ENCODE measurements at regions of chr1 and their contacts with region 1.

Region 1: DNA sequence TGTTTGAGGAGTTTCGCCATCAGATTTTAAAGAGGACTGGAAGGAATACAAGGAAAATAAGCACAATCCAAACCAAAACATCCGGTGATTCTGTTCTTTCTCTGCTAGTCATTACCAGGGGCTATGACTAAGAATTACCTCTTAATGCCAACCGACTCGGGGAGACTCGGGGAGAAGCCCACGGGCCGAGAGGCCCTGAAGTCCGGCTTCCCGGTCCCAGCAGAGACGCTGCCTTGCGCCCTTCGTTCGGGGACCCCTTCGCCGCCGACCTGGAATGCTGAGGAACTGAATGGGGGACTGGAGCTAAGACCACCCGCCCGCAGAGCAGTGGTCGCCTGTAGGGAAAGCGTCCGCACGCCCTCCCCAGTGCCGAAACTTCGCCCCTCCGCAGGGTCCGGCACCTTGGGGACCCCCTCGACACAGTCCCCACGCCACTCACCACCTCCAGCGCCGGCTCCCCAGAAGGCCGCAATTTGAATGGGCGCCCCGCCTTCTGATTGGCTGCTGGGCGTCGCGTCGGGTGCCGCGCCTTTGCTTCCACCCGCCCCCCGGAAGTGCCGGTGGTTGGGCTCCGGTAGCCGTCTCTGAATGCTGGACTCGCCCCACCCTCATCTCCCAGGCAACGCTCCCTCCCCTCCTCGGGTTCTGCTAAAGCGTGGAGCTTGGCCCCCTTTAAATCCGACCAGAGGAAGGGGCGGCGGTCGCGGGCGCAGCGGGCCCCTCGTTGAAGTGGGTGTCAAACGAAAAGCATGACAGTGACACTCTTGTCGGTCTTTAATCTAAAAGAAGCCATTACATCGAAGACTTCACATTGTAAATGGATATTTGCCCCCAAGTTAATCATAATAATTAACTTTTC is at the start of gene KIF14:
- DNase-seq: peak; percentile 89 to 95 (median 92)
- H3K4me3 ChIP-seq: peak within 1 kb of the TSS; percentile 87
- H3K4me3 Mint-ChIP-seq: peak within 1 kb of the TSS; percentile 91 to 98 (median 95)
- H3K27ac ChIP-seq: peak within 1 kb of the TSS; percentile 70
- H3K27ac Mint-ChIP-seq: peak within 1 kb of the TSS; percentile 67 to 96 (median 92)
- H3K4me1 ChIP-seq: peaks cover 4% of the 10 kb centered on the region
- H3K4me1 Mint-ChIP-seq: peaks cover 7 to 27% (median 20%) of the 10 kb centered on the region in 3 donors
- H3K27me3 ChIP-seq: no peaks in the 10 kb centered on the region
- H3K27me3 Mint-ChIP-seq: peaks cover 0 to 2% of the 10 kb centered on the region in 2 donors
- total RNA-seq, gene KIF14: 9.3 TPM

Region 2: GRCh38 chr1:200669314-200670241 is 49.1 kb after region 1 on chr1 and contains the start of gene DDX59:
- CTCF ChIA-PET with region 1: interaction called, 30 read pairs
- POLR2A ChIA-PET with region 1: interaction called, 8 read pairs
- DNase-seq: peak; percentile 85 to 90 (median 88)
- H3K4me3 ChIP-seq: peak within 1 kb of the TSS; percentile 95
- H3K4me3 Mint-ChIP-seq: peak within 1 kb of the TSS; percentile 94 to 99 (median 98)
- H3K27ac ChIP-seq: peak within 1 kb of the TSS; percentile 93
- H3K27ac Mint-ChIP-seq: peak within 1 kb of the TSS; percentile 89 to 99 (median 98)
- H3K4me1 ChIP-seq: peaks cover 25% of the 10 kb centered on the region
- H3K4me1 Mint-ChIP-seq: peaks cover 37 to 55% (median 52%) of the 10 kb centered on the region in 3 donors
- H3K27me3 ChIP-seq: no peaks in the 10 kb centered on the region
- H3K27me3 Mint-ChIP-seq: peaks cover 0 to 1% of the 10 kb centered on the region in 2 donors
- total RNA-seq, gene DDX59: 19.0 to 23.4 TPM

Region 3: DNA sequence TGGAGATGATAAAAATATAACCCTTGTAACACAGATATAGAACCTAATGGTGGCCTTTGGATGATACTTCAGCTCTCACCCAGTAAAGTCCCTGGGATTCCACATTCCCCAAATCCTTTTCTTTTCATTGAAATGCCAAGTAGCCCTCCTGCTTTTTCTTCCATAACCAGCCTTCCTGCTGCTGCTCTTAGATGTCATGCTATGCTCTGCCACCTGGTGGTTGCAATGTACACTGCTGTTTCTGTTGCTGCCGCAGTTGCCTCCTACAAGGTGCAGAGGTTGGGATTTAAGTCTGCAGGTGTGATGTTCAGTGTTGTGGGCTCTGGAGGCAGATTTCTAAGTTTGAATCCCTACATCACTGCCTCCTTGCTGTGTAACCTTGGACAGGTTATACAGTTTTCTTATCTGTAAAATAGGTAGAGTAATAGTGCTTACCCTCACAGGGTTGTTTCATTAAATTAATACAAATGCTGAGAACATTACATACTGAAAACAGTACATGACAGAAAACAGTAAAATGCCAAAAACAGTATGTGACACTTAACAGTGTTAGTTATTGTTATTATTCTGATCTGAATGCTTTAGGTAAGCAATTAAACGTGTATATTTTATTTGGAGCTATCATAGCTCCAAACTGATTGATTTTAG is 182.5 kb after region 1 on chr1:
- CTCF ChIA-PET with region 1: interaction called, 19 read pairs
- POLR2A ChIA-PET with region 1: no interaction called
- DNase-seq: peak; percentile 49 to 74 (median 62)
- H3K4me3 ChIP-seq: no peak overlapping the region
- H3K4me3 Mint-ChIP-seq: no peak overlapping the region
- H3K27ac ChIP-seq: no peak overlapping the region
- H3K27ac Mint-ChIP-seq: no peak overlapping the region
- H3K4me1 ChIP-seq: no peaks in the 10 kb centered on the region
- H3K4me1 Mint-ChIP-seq: peaks cover 0 to 4% (median 0%) of the 10 kb centered on the region in 3 donors
- H3K27me3 ChIP-seq: no peaks in the 10 kb centered on the region
- H3K27me3 Mint-ChIP-seq: peaks cover 4 to 10% of the 10 kb centered on the region in 2 donors

Region 4: DNA sequence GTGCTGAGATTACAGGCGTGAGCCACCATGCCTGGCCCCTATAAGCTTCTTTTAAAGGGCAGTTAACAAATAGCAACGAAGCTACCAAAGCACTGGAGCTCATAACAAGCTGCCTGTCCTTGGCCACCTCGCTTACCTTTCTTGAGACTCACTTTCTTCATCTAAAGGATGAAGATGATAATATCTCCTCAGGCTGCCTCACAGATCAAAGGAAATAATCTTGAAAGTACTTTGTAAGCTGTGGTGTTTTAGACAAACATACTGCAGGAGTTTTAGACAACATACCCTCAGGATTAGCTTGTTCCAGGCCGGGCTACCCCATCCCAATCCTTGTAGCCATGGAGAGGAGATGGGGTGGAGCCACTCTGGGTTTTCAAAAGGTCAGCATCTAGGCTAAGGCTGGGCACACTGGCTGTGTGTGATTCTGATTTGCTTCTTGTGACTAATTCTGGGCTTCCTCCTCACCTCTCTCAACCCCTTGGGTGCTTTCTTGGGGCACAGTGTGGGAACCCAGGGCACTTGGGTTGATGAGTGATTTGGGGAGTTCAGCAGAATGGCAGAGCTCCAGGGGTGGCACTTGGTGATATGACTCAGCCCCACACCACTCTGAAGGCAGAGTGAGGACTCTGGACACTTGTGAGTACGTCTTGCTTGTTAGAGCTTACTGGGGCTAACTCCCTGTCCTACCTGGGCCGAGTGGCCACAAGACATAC is 257.5 kb after region 1 on chr1:
- CTCF ChIA-PET with region 1: interaction called, 10 read pairs
- POLR2A ChIA-PET with region 1: no interaction called
- DNase-seq: peak in 1 of 5 donors; percentile 19
- H3K4me3 ChIP-seq: no peak overlapping the region
- H3K4me3 Mint-ChIP-seq: peak overlapping the region in 3 of 7 donors; percentile 11 to 50 (median 23)
- H3K27ac ChIP-seq: no peak overlapping the region
- H3K27ac Mint-ChIP-seq: peak overlapping the region in 7 of 8 donors; percentile 40 to 89 (median 63)
- H3K4me1 ChIP-seq: peaks cover 20% of the 10 kb centered on the region
- H3K4me1 Mint-ChIP-seq: peaks cover 33 to 46% (median 41%) of the 10 kb centered on the region in 3 donors
- H3K27me3 ChIP-seq: peaks cover 9% of the 10 kb centered on the region
- H3K27me3 Mint-ChIP-seq: peaks cover 12 to 17% of the 10 kb centered on the region in 2 donors

Region 5: GRCh38 chr1:201114236-201115131 is 494.0 kb after region 1 on chr1:
- CTCF ChIA-PET with region 1: interaction called, 13 read pairs
- POLR2A ChIA-PET with region 1: no interaction called
- DNase-seq: peak; percentile 46 to 78 (median 63)
- H3K4me3 ChIP-seq: peak overlapping the region; percentile 92
- H3K4me3 Mint-ChIP-seq: peak overlapping the region; percentile 84 to 97 (median 92)
- H3K27ac ChIP-seq: peak overlapping the region; percentile 47
- H3K27ac Mint-ChIP-seq: peak overlapping the region in 7 of 8 donors; percentile 72 to 94 (median 85)
- H3K4me1 ChIP-seq: peaks cover 9% of the 10 kb centered on the region
- H3K4me1 Mint-ChIP-seq: peaks cover 9 to 28% (median 25%) of the 10 kb centered on the region in 3 donors
- H3K27me3 ChIP-seq: no peaks in the 10 kb centered on the region
- H3K27me3 Mint-ChIP-seq: peaks cover 0 to 1% of the 10 kb centered on the region in 2 donors

Measured in CD8-positive, alpha-beta memory T cell (primary cell).